Psoas muscle (tissue), 8 donors: ENCODE measurements at regions of chrX and their contacts with region 1.

Region 1: DNA sequence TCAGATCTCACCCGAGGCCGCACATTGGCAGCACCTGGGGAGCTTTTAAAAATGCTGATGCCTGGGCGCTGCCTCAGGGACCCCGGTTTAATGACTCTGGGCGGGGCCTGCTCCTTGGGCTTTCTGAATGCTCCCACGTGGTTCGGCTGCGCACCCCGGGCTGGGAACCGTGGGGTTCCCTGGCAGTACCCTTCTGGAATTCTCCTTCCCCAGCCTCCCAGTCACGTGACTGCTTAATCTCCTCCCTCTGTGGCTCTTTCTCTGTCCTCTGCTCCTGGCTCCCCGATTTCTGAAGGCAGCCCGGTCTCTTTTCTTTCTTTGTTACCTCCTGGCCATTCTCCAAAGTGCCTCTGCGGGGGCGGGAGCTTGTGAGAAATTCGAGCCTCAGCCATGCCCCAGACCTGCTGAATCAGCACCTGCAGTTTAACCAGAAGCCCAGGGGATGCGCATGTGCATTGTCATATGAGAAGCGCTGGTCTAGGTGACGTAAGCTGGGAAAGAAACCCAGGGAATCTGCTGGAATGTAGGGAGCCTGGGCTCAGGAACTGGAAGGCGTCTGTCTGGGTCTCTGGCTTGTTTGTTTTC is 16.6 kb downstream of the CLCN4 start:
- DNase-seq: peak; percentile 67 to 71
- ATAC-seq: peak; percentile 66 to 80 (median 76)
- H3K4me3 ChIP-seq: peak overlapping the region; percentile 41
- H3K27ac ChIP-seq: peak overlapping the region; percentile 64
- H3K4me1 ChIP-seq: peaks cover 16% of the 10 kb centered on the region
- H3K27me3 ChIP-seq: peaks cover 0 to 3% (median 0%) of the 10 kb centered on the region in 3 donors
- CTCF ChIP-seq: no peak

Region 2: GRCh38 chrX:10239611-10240064 is 66.2 kb after region 1 on chrX:
- intact Hi-C with region 1: loop called in 1 of 2 experiments (anchors 10 kb)
- DNase-seq: peak; percentile 48 to 76
- ATAC-seq: peak; percentile 78 to 87 (median 82)
- H3K4me3 ChIP-seq: no peak overlapping the region
- H3K27ac ChIP-seq: peak overlapping the region; percentile 58
- H3K4me1 ChIP-seq: peaks cover 3% of the 10 kb centered on the region
- H3K27me3 ChIP-seq: peaks cover 0 to 5% (median 0%) of the 10 kb centered on the region in 3 donors
- CTCF ChIP-seq: no peak

Region 3: GRCh38 chrX:10401239-10401638 is 227.8 kb after region 1 on chrX:
- intact Hi-C with region 1: no loop called
- DNase-seq: no peak
- ATAC-seq: no peak
- H3K4me3 ChIP-seq: no peak overlapping the region
- H3K27ac ChIP-seq: no peak overlapping the region
- H3K4me1 ChIP-seq: no peaks in the 10 kb centered on the region
- H3K27me3 ChIP-seq: no peaks in the 10 kb centered on the region
- CTCF ChIP-seq: no peak